Activated CD8-positive, alpha-beta memory T cell treated with anti-CD3 and anti-CD28 coated beads, Interleukin-2, amount 10 ng/mL, durations not matched to agents 7 days and 5 days (primary cell): ENCODE measurements at regions of chr11 and their contacts with region 1.

Region 1: GRCh38 chr11:2151500-2152257 is 9.3 kb downstream of the INS start:
- DNase-seq: peak; percentile 85
- ATAC-seq: peak; percentile 77
- H3K4me3 Mint-ChIP-seq: no peak overlapping the region
- H3K27ac Mint-ChIP-seq: no peak overlapping the region
- H3K4me1 Mint-ChIP-seq: peaks cover 3% of the 10 kb centered on the region
- H3K27me3 Mint-ChIP-seq: peaks cover 37% of the 10 kb centered on the region

Region 2: DNA sequence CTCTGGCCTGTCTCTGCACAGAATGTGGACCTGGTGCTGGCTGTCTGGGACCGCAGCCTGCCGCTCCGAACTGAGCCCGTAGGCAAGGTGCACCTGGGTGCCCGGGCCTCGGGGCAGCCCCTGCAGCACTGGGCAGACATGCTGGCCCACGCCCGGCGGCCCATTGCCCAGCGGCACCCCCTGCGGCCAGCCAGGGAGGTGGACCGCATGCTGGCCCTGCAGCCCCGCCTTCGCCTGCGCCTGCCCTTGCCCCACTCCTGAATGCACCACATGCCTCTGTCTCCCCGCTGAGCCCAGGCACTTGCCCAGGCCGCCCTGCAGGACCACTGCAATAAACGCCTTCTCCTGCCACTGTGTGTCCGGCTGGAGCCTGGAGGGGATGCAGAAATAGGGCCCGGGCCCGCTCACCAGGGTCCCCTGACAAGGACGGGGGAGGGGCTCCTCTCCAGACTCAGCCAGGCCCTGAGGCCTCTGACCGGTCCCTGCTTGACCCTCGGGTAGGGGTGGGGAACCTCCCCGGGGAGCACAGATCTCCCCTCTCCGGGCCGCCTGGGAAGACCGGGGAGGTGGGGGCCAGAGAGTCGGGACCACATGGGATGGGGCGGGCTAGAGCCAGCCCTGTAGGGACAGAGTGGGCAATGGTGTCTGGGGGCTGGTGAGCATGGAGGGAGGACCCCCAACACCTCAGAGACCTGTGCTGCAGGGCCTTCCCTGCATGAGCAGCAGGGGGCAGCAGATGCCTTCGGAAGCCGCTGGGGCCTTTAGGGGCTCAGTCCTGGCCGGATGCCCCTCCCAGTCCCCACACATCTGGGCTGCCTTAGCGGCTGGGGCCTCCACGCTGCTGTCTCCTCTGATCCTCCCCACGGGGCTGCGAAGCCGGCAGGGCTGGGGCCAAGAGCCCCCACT is 314.3 kb before region 1 on chr11:
- CTCF ChIA-PET with region 1: interaction called, 61 read pairs
- DNase-seq: peak; percentile 92
- ATAC-seq: peak; percentile 91
- H3K4me3 Mint-ChIP-seq: no peak overlapping the region
- H3K27ac Mint-ChIP-seq: no peak overlapping the region
- H3K4me1 Mint-ChIP-seq: peaks cover 8% of the 10 kb centered on the region
- H3K27me3 Mint-ChIP-seq: peaks cover 7% of the 10 kb centered on the region

Region 3: DNA sequence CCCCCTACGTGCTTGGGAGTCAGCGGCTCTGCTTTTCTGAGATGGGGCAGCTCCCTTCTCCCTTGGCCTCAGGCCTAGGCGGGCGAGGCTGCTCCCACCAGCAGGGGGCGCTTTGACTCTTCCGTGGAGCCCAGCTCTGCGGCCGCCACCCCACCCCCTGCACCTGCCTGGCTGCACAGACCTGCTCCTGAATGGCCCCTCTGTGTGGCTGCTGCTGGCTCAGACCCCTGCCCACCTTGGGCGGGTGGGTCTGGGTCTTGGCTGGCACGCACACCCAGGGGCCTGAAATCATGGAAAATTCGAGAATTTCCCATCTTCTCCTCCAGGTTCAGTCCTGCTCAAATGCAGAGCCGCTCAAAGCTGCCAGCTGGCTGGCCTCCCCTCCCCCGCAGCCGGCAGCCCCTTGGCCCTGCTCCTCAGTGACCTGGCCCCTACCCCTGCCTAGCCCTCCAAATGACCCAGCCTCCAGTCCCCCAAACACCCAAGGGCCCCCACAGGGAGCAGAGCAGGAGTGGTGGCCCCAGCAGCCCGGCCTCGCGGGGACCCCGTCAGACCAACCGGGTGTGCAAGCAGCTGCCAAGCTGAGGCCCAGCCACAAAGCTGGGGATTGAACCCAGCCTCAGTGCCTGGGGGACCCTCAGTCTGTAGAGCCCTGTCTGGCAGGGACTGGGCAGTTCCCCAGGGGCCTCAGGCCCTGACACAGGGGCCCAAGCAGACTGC is 269.0 kb before region 1 on chr11:
- CTCF ChIA-PET with region 1: interaction called, 24 read pairs
- DNase-seq: peak; percentile 77
- ATAC-seq: peak; percentile 91
- H3K4me3 Mint-ChIP-seq: no peak overlapping the region
- H3K27ac Mint-ChIP-seq: no peak overlapping the region
- H3K4me1 Mint-ChIP-seq: peaks cover 5% of the 10 kb centered on the region
- H3K27me3 Mint-ChIP-seq: no peaks in the 10 kb centered on the region

Region 4: GRCh38 chr11:2002807-2003206 is 148.9 kb before region 1 on chr11:
- CTCF ChIA-PET with region 1: interaction called, 31 read pairs
- DNase-seq: no peak
- ATAC-seq: peak; percentile 74
- H3K4me3 Mint-ChIP-seq: no peak overlapping the region
- H3K27ac Mint-ChIP-seq: no peak overlapping the region
- H3K4me1 Mint-ChIP-seq: no peaks in the 10 kb centered on the region
- H3K27me3 Mint-ChIP-seq: no peaks in the 10 kb centered on the region

Region 5: DNA sequence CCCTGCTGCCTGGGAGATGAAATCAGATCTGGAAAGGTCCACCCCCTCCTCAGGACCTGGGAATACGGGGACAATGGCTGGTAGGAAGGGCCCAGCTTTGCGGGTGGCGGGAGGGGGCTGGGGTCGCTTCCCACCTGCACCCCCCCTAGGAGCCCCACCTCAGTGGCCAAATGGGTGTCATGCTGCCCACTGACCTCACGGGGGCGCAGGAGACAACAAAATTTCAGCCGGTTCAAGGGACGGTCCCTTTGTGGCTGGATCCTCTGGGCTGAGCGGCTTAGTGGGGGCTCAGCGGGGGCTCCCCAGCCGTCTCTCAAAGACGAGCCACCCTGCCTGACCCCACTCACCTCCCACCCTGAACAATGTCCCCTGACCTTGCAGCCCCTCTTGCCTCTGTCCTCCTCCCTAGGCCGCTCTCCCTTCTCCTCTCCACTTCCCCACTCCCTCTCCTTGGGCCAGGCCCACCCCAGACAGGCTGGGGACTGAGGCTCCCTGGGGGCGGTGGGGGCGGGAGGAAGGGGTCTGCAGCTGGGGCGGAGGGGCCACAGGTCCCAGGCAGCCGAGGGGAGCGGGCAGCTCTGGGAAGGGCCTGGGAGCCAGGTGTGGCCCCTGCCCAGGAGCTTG is 114.7 kb before region 1 on chr11:
- CTCF ChIA-PET with region 1: interaction called, 315 read pairs
- DNase-seq: no peak
- ATAC-seq: no peak
- H3K4me3 Mint-ChIP-seq: no peak overlapping the region
- H3K27ac Mint-ChIP-seq: no peak overlapping the region
- H3K4me1 Mint-ChIP-seq: no peaks in the 10 kb centered on the region
- H3K27me3 Mint-ChIP-seq: no peaks in the 10 kb centered on the region

Region 6: GRCh38 chr11:2092956-2093412 is 58.7 kb before region 1 on chr11:
- CTCF ChIA-PET with region 1: no interaction called
- DNase-seq: peak; percentile 53
- ATAC-seq: no peak
- H3K4me3 Mint-ChIP-seq: no peak overlapping the region
- H3K27ac Mint-ChIP-seq: no peak overlapping the region
- H3K4me1 Mint-ChIP-seq: peaks cover 6% of the 10 kb centered on the region
- H3K27me3 Mint-ChIP-seq: peaks cover 12% of the 10 kb centered on the region

Region 7: DNA sequence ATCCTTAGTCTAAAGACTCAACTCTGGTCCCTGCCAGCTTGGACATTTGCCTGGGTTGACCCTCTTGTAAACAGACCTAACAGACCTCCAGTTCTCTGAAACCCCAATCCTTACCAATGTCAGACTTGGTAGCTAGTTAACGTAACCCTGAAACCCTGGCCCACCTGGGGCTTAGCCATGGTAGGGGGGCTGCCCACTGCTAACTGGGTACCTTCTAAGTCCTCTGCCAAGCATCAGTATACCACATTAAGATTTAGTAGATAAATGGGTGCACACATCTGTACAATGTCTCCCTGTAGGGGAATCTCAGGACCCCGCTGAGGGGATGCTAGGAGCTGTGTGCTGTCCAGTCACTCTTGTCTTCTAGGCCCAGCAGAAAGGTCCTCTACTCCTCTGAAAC is 49.9 kb after region 1 on chr11:
- CTCF ChIA-PET with region 1: no interaction called
- DNase-seq: no peak
- ATAC-seq: no peak
- H3K4me3 Mint-ChIP-seq: no peak overlapping the region
- H3K27ac Mint-ChIP-seq: no peak overlapping the region
- H3K4me1 Mint-ChIP-seq: peaks cover 3% of the 10 kb centered on the region
- H3K27me3 Mint-ChIP-seq: peaks cover 4% of the 10 kb centered on the region